Activated CD4-positive, alpha-beta memory T cell treated with anti-CD3 and anti-CD28 coated beads for 36 hours (primary cell): ENCODE measurements at regions of chr12 and their contacts with region 1.

Region 1: GRCh38 chr12:56041552-56042429 is at the start of gene RPS26:
- DNase-seq: peak; percentile 95
- H3K4me3 Mint-ChIP-seq: peak within 1 kb of the TSS; percentile 98
- H3K27ac Mint-ChIP-seq: peak within 1 kb of the TSS; percentile 98
- H3K4me1 Mint-ChIP-seq: peaks cover 47% of the 10 kb centered on the region
- H3K27me3 Mint-ChIP-seq: no peaks in the 10 kb centered on the region
- total RNA-seq, gene RPS26: 28.1 to 40.7 TPM

Region 2: DNA sequence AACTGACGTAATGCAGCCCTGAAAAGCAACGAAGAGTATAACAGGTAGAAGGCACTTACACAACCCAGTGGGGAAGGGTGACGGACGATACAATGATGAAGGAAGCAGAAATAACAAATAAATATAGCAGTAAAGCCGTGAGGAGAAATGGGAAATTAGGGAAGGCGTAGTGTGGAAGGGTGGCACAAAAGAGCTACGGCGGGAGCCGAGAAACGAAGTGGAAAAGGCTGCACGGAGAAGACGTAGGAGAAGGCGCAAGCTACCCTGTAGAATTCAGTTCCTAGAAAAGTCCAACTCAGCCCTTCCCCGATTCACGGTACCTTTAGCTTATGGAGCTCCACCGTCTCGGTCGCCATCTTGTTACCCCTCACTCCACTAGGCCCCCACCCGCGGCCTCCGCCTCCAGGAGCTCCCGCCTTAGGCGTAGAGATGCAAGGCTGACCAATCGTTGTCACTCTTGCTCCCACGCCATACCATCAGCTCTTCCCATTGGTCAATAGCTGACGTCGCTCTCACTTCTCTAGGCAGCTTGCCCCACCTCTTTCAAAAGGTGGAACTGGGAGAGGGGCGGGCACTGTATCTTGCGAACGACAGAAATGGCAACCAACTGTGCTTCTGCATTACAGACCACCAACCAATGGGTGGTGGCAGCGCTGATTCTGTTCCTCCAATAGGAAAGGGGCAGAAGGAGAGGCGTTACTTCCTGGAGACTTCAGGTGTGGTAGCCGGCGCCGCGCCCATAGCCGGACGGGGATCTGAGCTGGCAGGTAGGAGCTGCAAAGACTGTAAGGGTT is 224.2 kb before region 1 on chr12 and contains the starts of genes ORMDL2 and SARNP:
- CTCF ChIA-PET with region 1: interaction called, 4 read pairs
- POLR2A ChIA-PET with region 1: no interaction called
- intact Hi-C with region 1: loop called (anchors 2 kb)
- DNase-seq: peak; percentile 99
- H3K4me3 Mint-ChIP-seq: no peak within 1 kb of the TSS
- H3K27ac Mint-ChIP-seq: no peak within 1 kb of the TSS
- H3K4me1 Mint-ChIP-seq: peaks cover 49% of the 10 kb centered on the region
- H3K27me3 Mint-ChIP-seq: no peaks in the 10 kb centered on the region
- total RNA-seq, gene ORMDL2: 37.9 to 41.2 TPM
- total RNA-seq, gene SARNP: 104 to 110 TPM

Region 3: GRCh38 chr12:55926738-55927587 is 114.8 kb before region 1 on chr12:
- CTCF ChIA-PET with region 1: interaction called, 3 read pairs
- POLR2A ChIA-PET with region 1: no interaction called
- intact Hi-C with region 1: loop called (anchors 1 kb)
- DNase-seq: peak; percentile 96
- H3K4me3 Mint-ChIP-seq: peak overlapping the region; percentile 96
- H3K27ac Mint-ChIP-seq: peak overlapping the region; percentile 98
- H3K4me1 Mint-ChIP-seq: peaks cover 43% of the 10 kb centered on the region
- H3K27me3 Mint-ChIP-seq: no peaks in the 10 kb centered on the region

Region 4: GRCh38 chr12:55996715-55997534 is 44.9 kb before region 1 on chr12 and contains the start of gene SUOX:
- CTCF ChIA-PET with region 1: interaction called, 37 read pairs
- POLR2A ChIA-PET with region 1: interaction called, 3 read pairs
- intact Hi-C with region 1: loop called (anchors 1 kb)
- DNase-seq: peak; percentile 61
- H3K4me3 Mint-ChIP-seq: peak within 1 kb of the TSS; percentile 60
- H3K27ac Mint-ChIP-seq: no peak within 1 kb of the TSS
- H3K4me1 Mint-ChIP-seq: peaks cover 19% of the 10 kb centered on the region
- H3K27me3 Mint-ChIP-seq: peaks cover 5% of the 10 kb centered on the region
- total RNA-seq, gene SUOX: 2.4 to 2.7 TPM

Region 5: GRCh38 chr12:56029666-56030293 is 12.0 kb before region 1 on chr12:
- CTCF ChIA-PET with region 1: interaction called, 18 read pairs
- POLR2A ChIA-PET with region 1: no interaction called
- intact Hi-C with region 1: no loop called
- DNase-seq: peak; percentile 54
- H3K4me3 Mint-ChIP-seq: no peak overlapping the region
- H3K27ac Mint-ChIP-seq: no peak overlapping the region
- H3K4me1 Mint-ChIP-seq: peaks cover 19% of the 10 kb centered on the region
- H3K27me3 Mint-ChIP-seq: no peaks in the 10 kb centered on the region

Region 6: GRCh38 chr12:56104109-56104814 is 62.5 kb after region 1 on chr12 and contains the start of gene PA2G4:
- CTCF ChIA-PET with region 1: interaction called, 23 read pairs
- POLR2A ChIA-PET with region 1: interaction called, 15 read pairs
- intact Hi-C with region 1: loop called (anchors 1 kb)
- DNase-seq: peak; percentile 99
- H3K4me3 Mint-ChIP-seq: peak within 1 kb of the TSS; percentile 100
- H3K27ac Mint-ChIP-seq: peak within 1 kb of the TSS; percentile 97
- H3K4me1 Mint-ChIP-seq: peaks cover 34% of the 10 kb centered on the region
- H3K27me3 Mint-ChIP-seq: no peaks in the 10 kb centered on the region
- total RNA-seq, gene PA2G4: 399 to 410 TPM

Region 7: GRCh38 chr12:56636675-56637540 is 595.1 kb after region 1 on chr12:
- CTCF ChIA-PET with region 1: no interaction called
- POLR2A ChIA-PET with region 1: no interaction called
- intact Hi-C with region 1: loop called (anchors 10 kb)
- DNase-seq: peak; percentile 96
- H3K4me3 Mint-ChIP-seq: peak overlapping the region; percentile 82
- H3K27ac Mint-ChIP-seq: peak overlapping the region; percentile 86
- H3K4me1 Mint-ChIP-seq: peaks cover 45% of the 10 kb centered on the region
- H3K27me3 Mint-ChIP-seq: no peaks in the 10 kb centered on the region